Naive thymus-derived CD4-positive, alpha-beta T cell (primary cell): ENCODE measurements at regions of chr17 and their contacts with region 1.

Region 1: GRCh38 chr17:48593840-48594537 is 410 bp upstream of the HOXB5 start:
- DNase-seq: peak; percentile 67 to 89 (median 80)
- ATAC-seq: peak; percentile 83
- H3K4me3 ChIP-seq: peak overlapping the region; percentile 56
- H3K4me3 Mint-ChIP-seq: peak overlapping the region; percentile 75 to 88 (median 81)
- H3K27ac ChIP-seq: no peak overlapping the region
- H3K27ac Mint-ChIP-seq: peak overlapping the region in 1 of 9 donors; percentile 16
- H3K4me1 ChIP-seq: peaks cover 37 to 40% of the 10 kb centered on the region in 2 donors
- H3K4me1 Mint-ChIP-seq: peaks cover 34 to 70% (median 51%) of the 10 kb centered on the region in 7 donors
- H3K27me3 ChIP-seq: peaks cover 6 to 54% of the 10 kb centered on the region in 2 donors
- H3K27me3 Mint-ChIP-seq: peaks cover 89 to 97% (median 93%) of the 10 kb centered on the region in 5 donors

Region 2: DNA sequence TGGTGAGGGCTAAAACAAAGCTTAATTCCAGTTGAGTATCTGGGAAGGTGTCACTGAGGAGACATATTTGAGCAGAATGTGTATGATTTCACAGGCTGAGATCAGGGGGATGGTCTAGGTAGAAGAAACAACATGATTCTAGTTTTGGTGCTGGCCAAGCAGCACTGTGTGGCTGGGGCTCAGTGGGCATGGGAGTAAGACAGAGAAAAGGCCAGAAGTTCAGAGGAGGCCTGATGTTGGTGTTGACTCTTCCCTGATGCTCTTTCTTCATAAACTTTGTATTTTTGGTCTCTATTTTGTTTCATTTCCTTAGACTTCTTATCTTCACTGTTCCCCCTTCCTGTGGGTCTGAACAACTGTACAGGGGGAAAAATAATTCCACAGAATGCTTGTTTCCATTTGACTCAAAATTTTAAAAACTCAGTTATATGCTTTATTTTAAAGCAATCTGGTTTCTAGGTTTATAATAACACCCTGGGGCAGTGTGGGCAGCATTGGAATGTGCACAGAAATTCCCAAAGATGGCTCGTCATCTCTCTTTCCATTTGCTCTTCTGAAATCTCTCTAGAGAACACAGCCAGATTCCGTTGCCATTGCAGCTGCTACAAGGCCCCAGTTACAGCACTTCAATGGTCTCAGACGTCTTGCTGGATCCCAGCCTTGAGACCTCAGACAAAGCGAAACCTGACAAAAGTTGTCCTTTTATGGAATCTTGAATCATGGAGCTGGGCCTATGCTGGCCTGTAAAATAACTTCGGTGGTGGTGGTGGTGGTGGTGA is 418.1 kb before region 1 on chr17:
- CTCF ChIA-PET with region 1: no interaction called
- POLR2A ChIA-PET with region 1: no interaction called
- intact Hi-C with region 1: loop called in 1 of 2 experiments (anchors 10 kb)
- DNase-seq: no peak
- ATAC-seq: no peak
- H3K4me3 ChIP-seq: no peak overlapping the region
- H3K4me3 Mint-ChIP-seq: no peak overlapping the region
- H3K27ac ChIP-seq: no peak overlapping the region
- H3K27ac Mint-ChIP-seq: peak overlapping the region in 7 of 9 donors; percentile 7 to 72 (median 33)
- H3K4me1 ChIP-seq: peaks cover 0 to 7% of the 10 kb centered on the region in 2 donors
- H3K4me1 Mint-ChIP-seq: peaks cover 24 to 63% (median 40%) of the 10 kb centered on the region in 7 donors
- H3K27me3 ChIP-seq: no peaks in the 10 kb centered on the region
- H3K27me3 Mint-ChIP-seq: no peaks in the 10 kb centered on the region

Region 3: DNA sequence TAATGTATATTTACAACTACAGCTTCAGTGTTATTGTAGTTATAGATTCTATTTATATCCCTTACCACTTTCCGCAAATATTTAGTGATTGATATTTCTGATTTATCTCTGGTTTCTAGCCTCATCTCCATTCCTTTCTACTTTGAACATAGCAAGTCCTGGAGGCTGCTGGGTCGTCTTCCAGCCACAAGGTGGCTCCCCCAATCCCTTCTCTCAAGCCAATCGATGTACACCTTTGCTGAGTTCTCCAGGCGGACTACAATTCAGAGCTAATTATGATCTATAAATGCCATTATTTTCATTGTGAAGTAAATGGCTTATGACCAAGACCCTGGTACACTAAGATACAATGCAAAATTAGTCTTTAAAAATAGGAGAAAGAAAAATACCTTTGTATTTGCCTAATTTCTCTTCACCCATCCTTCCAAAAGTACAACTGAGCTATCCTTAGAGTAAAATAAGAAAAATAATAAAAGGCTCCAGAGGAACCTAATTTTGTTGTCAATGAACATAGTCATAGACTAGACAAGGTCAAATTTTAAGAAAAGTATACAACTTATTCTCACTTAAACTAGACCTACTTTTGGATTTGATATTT is 286.1 kb before region 1 on chr17:
- CTCF ChIA-PET with region 1: interaction called, 6 read pairs
- POLR2A ChIA-PET with region 1: interaction called, 3 read pairs
- intact Hi-C with region 1: loop called (anchors 1 kb)
- DNase-seq: peak in 6 of 9 donors; percentile 25 to 49 (median 34)
- ATAC-seq: peak; percentile 78
- H3K4me3 ChIP-seq: no peak overlapping the region
- H3K4me3 Mint-ChIP-seq: no peak overlapping the region
- H3K27ac ChIP-seq: no peak overlapping the region
- H3K27ac Mint-ChIP-seq: peak overlapping the region in 2 of 9 donors; percentile 1 to 27
- H3K4me1 ChIP-seq: no peaks in the 10 kb centered on the region
- H3K4me1 Mint-ChIP-seq: peaks cover 13 to 57% (median 36%) of the 10 kb centered on the region in 7 donors
- H3K27me3 ChIP-seq: no peaks in the 10 kb centered on the region
- H3K27me3 Mint-ChIP-seq: no peaks in the 10 kb centered on the region

Region 4: GRCh38 chr17:48351831-48352332 is 242.1 kb before region 1 on chr17:
- CTCF ChIA-PET with region 1: interaction called, 21 read pairs
- POLR2A ChIA-PET with region 1: no interaction called
- intact Hi-C with region 1: loop called in 1 of 2 experiments (anchors 1 kb)
- DNase-seq: peak in 7 of 9 donors; percentile 17 to 58 (median 41)
- ATAC-seq: peak; percentile 72
- H3K4me3 ChIP-seq: no peak overlapping the region
- H3K4me3 Mint-ChIP-seq: no peak overlapping the region
- H3K27ac ChIP-seq: no peak overlapping the region
- H3K27ac Mint-ChIP-seq: no peak overlapping the region
- H3K4me1 ChIP-seq: peaks cover 0 to 4% of the 10 kb centered on the region in 2 donors
- H3K4me1 Mint-ChIP-seq: peaks cover 0 to 20% (median 13%) of the 10 kb centered on the region in 7 donors
- H3K27me3 ChIP-seq: no peaks in the 10 kb centered on the region
- H3K27me3 Mint-ChIP-seq: no peaks in the 10 kb centered on the region

Region 5: GRCh38 chr17:48475494-48475893 is 118.5 kb before region 1 on chr17:
- CTCF ChIA-PET with region 1: no interaction called
- POLR2A ChIA-PET with region 1: no interaction called
- intact Hi-C with region 1: no loop called
- DNase-seq: no peak
- ATAC-seq: no peak
- H3K4me3 ChIP-seq: no peak overlapping the region
- H3K4me3 Mint-ChIP-seq: no peak overlapping the region
- H3K27ac ChIP-seq: no peak overlapping the region
- H3K27ac Mint-ChIP-seq: no peak overlapping the region
- H3K4me1 ChIP-seq: peaks cover 0 to 6% of the 10 kb centered on the region in 2 donors
- H3K4me1 Mint-ChIP-seq: peaks cover 0 to 24% (median 3%) of the 10 kb centered on the region in 7 donors
- H3K27me3 ChIP-seq: no peaks in the 10 kb centered on the region
- H3K27me3 Mint-ChIP-seq: peaks cover 0 to 13% (median 0%) of the 10 kb centered on the region in 5 donors

Region 6: GRCh38 chr17:48500966-48501426 is 93.0 kb before region 1 on chr17:
- CTCF ChIA-PET with region 1: interaction called, 4 read pairs
- POLR2A ChIA-PET with region 1: no interaction called
- intact Hi-C with region 1: loop called in 1 of 2 experiments (anchors 1 kb)
- DNase-seq: peak in 1 of 9 donors; percentile 25
- ATAC-seq: no peak
- H3K4me3 ChIP-seq: no peak overlapping the region
- H3K4me3 Mint-ChIP-seq: no peak overlapping the region
- H3K27ac ChIP-seq: no peak overlapping the region
- H3K27ac Mint-ChIP-seq: peak overlapping the region in 1 of 9 donors; percentile 27
- H3K4me1 ChIP-seq: peaks cover 0 to 5% of the 10 kb centered on the region in 2 donors
- H3K4me1 Mint-ChIP-seq: peaks cover 0 to 37% (median 0%) of the 10 kb centered on the region in 7 donors
- H3K27me3 ChIP-seq: no peaks in the 10 kb centered on the region
- H3K27me3 Mint-ChIP-seq: peaks cover 6 to 64% (median 19%) of the 10 kb centered on the region in 5 donors

Region 7: GRCh38 chr17:48555258-48556228 is 38.4 kb before region 1 on chr17:
- CTCF ChIA-PET with region 1: no interaction called
- POLR2A ChIA-PET with region 1: no interaction called
- intact Hi-C with region 1: no loop called
- DNase-seq: peak in 3 of 9 donors; percentile 15 to 20 (median 19)
- ATAC-seq: peak; percentile 56
- H3K4me3 ChIP-seq: peak overlapping the region; percentile 41
- H3K4me3 Mint-ChIP-seq: peak overlapping the region; percentile 81 to 96 (median 92)
- H3K27ac ChIP-seq: no peak overlapping the region
- H3K27ac Mint-ChIP-seq: peak overlapping the region; percentile 7 to 97 (median 84)
- H3K4me1 ChIP-seq: no peaks in the 10 kb centered on the region
- H3K4me1 Mint-ChIP-seq: peaks cover 4 to 19% (median 12%) of the 10 kb centered on the region in 7 donors
- H3K27me3 ChIP-seq: no peaks in the 10 kb centered on the region
- H3K27me3 Mint-ChIP-seq: peaks cover 7 to 71% (median 22%) of the 10 kb centered on the region in 5 donors